ENCODE measurements at regions of chr9 and their contacts with region 1.

Region 1: GRCh38 chr9:77841739-77842386 is 189.7 kb downstream of the GNAQ start:
- H3K4me3 ChIP-seq: no peak overlapping the region
- H3K27ac ChIP-seq: no peak overlapping the region
- H3K4me1 ChIP-seq: peaks cover 3% of the 10 kb centered on the region; the same call in 1 of the 2 replicates
- CTCF ChIP-seq: no peak

Region 2: DNA sequence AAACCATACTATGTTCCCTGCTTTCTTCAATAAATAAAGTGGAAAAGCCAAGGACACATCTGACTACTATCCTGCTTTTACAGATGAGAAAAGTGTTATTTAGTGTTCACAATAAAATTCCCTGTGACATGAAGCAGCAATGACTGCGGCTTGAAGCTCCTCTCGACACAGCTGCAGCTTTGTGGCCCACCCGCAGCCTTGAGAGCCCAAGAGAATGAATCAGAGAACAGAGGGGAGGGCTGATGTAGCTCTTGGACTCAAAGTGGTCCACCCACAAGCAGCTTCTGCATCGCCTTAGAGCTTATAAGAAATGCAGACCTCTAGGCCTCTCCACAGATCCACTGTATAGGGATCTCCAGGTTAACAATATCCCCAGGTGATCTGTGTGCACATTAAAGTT is 12.4 kb before region 1 on chr9:
- CTCF ChIA-PET with region 1: interaction called, 12 read pairs
- POLR2A ChIA-PET with region 1: no interaction called
- H3K4me3 ChIP-seq: no peak overlapping the region
- H3K27ac ChIP-seq: no peak overlapping the region
- H3K4me1 ChIP-seq: no peaks in the 10 kb centered on the region; the same call in 1 of the 2 replicates
- CTCF ChIP-seq: no peak

Measured in HEK293 (cell line).